Activated CD8-positive, alpha-beta T cell treated with anti-CD3 and anti-CD28 coated beads, Interleukin-2, amount 10 ng/mL, durations not matched to agents 7 days and 5 days (primary cell): ENCODE measurements at regions of chr16 and their contacts with region 1.

Region 1: GRCh38 chr16:2155091-2156021 is at the start of gene TRAF7:
- DNase-seq: peak; percentile 99
- ATAC-seq: peak; percentile 93
- H3K4me3 Mint-ChIP-seq: peak within 1 kb of the TSS; percentile 97
- H3K27ac Mint-ChIP-seq: peak within 1 kb of the TSS; percentile 93
- H3K4me1 Mint-ChIP-seq: peaks cover 47% of the 10 kb centered on the region
- H3K27me3 Mint-ChIP-seq: no peaks in the 10 kb centered on the region
- total RNA-seq, gene TRAF7: 56.8 to 59.5 TPM

Region 2: GRCh38 chr16:1971796-1972489 is 183.4 kb before region 1 on chr16 and contains the start of gene TBL3:
- CTCF ChIA-PET with region 1: no interaction called
- POLR2A ChIA-PET with region 1: interaction called, 10 read pairs
- DNase-seq: peak; percentile 98
- ATAC-seq: peak; percentile 92
- H3K4me3 Mint-ChIP-seq: peak within 1 kb of the TSS; percentile 94
- H3K27ac Mint-ChIP-seq: peak within 1 kb of the TSS; percentile 97
- H3K4me1 Mint-ChIP-seq: peaks cover 30% of the 10 kb centered on the region
- H3K27me3 Mint-ChIP-seq: no peaks in the 10 kb centered on the region
- total RNA-seq, gene TBL3: 37.6 to 37.9 TPM

Region 3: DNA sequence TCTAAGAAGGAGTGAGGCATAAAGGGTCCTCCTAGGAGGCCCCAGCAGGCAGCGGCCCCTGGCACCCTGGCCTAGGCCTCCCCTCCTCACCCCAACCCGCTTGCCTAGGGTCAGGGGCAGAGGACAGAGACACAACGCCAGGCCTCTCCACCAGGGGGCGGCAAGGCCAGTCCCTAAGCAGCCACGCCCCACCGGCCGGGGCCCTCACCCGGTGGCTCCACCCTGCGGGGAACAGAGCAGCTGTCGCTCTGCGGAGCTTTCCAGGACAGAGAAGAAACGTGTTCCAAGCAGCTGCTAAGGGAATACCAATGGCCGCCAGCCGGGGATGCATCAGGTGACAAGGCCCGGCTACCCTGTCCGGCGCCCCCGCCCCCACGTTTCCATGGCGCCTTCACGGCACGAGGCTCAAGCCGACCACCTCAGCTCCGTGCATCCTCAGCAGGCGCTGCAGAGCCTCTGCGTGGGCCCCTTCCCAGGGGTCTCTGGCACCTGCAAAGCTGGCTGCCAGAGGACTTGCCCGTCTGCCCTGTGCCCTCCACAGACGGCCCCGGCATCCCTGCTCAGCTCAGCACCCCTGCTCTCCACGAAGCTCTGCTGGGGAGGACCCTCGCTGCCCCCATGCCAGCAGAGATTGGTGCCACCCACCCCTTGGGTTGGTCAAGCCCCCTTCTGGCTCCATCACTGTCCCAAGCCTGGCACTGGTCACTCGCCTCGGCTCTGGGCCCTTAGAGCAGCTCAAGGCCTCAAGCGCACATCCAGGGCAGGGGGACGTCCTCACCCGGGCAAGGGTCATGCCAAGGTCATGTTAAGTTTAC is 151.3 kb before region 1 on chr16:
- CTCF ChIA-PET with region 1: interaction called, 14 read pairs
- POLR2A ChIA-PET with region 1: interaction called, 16 read pairs
- DNase-seq: peak; percentile 91
- ATAC-seq: peak; percentile 92
- H3K4me3 Mint-ChIP-seq: no peak overlapping the region
- H3K27ac Mint-ChIP-seq: no peak overlapping the region
- H3K4me1 Mint-ChIP-seq: peaks cover 35% of the 10 kb centered on the region
- H3K27me3 Mint-ChIP-seq: no peaks in the 10 kb centered on the region

Region 4: GRCh38 chr16:2023098-2023925 is 132.0 kb before region 1 on chr16:
- CTCF ChIA-PET with region 1: interaction called, 25 read pairs
- POLR2A ChIA-PET with region 1: interaction called, 14 read pairs
- DNase-seq: peak; percentile 96
- ATAC-seq: peak; percentile 81
- H3K4me3 Mint-ChIP-seq: peak overlapping the region; percentile 66
- H3K27ac Mint-ChIP-seq: peak overlapping the region; percentile 82
- H3K4me1 Mint-ChIP-seq: peaks cover 27% of the 10 kb centered on the region
- H3K27me3 Mint-ChIP-seq: peaks cover 40% of the 10 kb centered on the region

Region 5: GRCh38 chr16:2194852-2195321 is 39.5 kb after region 1 on chr16:
- CTCF ChIA-PET with region 1: interaction called, 10 read pairs
- POLR2A ChIA-PET with region 1: interaction called, 4 read pairs
- DNase-seq: peak; percentile 67
- ATAC-seq: peak; percentile 70
- H3K4me3 Mint-ChIP-seq: no peak overlapping the region
- H3K27ac Mint-ChIP-seq: no peak overlapping the region
- H3K4me1 Mint-ChIP-seq: peaks cover 3% of the 10 kb centered on the region
- H3K27me3 Mint-ChIP-seq: peaks cover 40% of the 10 kb centered on the region